ENCODE measurements at regions of chr3 and their contacts with region 1.

Region 1: DNA sequence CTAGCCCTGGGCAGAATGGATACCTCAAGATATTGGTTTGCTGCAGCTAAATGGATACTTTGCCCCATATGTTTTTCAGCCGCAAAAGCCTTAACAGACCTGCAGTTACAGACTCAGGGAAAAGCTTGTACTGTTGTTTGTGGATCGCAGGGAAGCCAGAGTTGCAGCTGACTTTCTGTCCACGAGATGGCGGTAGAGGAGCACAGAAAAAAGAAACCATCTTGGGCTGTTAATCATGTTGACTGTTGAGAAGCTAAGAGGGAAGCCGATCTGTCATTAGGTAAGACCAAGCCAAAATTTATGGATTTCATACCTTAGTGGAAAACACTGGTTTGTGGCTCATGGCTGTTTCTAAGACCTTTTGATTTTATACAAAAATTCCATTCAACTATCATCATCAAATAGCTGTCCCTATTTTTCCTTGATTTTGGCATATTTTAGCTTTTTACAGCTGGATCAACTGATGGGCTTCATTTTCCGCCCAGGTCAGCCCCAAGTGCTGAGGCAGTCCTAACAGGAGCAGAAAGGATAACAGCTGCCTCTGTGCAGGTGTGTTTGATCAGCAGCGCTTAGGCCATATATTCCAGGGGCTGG is 205.7 kb upstream of the ZPLD1 start:
- DNase-seq: peak; percentile 62
- ATAC-seq: peak; percentile 87
- H3K4me3 ChIP-seq: no peak overlapping the region
- H3K27ac ChIP-seq: no peak overlapping the region
- H3K4me1 ChIP-seq: no peaks in the 10 kb centered on the region
- H3K27me3 ChIP-seq: peaks cover 11% of the 10 kb centered on the region
- CTCF ChIP-seq: peak; percentile 91
- POLR2A ChIP-seq: no peak
- RAD21 ChIP-seq: peak; percentile 80

Region 2: GRCh38 chr3:101703169-101703568 is 526.0 kb before region 1 on chr3:
- CTCF ChIA-PET with region 1: no interaction called
- POLR2A ChIA-PET with region 1: no interaction called
- dilution Hi-C with region 1: no loop called
- in situ Hi-C with region 1: no loop called
- intact Hi-C with region 1: loop called (anchors 10 kb)
- DNase-seq: no peak
- ATAC-seq: no peak
- H3K4me3 ChIP-seq: no peak overlapping the region
- H3K27ac ChIP-seq: no peak overlapping the region
- H3K4me1 ChIP-seq: no peaks in the 10 kb centered on the region
- H3K27me3 ChIP-seq: peaks cover 2% of the 10 kb centered on the region; the same call in 1 of the 2 replicates
- CTCF ChIP-seq: no peak
- POLR2A ChIP-seq: no peak
- RAD21 ChIP-seq: no peak

Region 3: GRCh38 chr3:101809178-101810021 is 419.8 kb before region 1 on chr3:
- CTCF ChIA-PET with region 1: interaction called, 81 read pairs
- POLR2A ChIA-PET with region 1: no interaction called
- dilution Hi-C with region 1: no loop called
- in situ Hi-C with region 1: loop called (anchors 5 kb)
- intact Hi-C with region 1: loop called (anchors 1 kb)
- DNase-seq: peak; percentile 56
- ATAC-seq: peak; percentile 77
- H3K4me3 ChIP-seq: no peak overlapping the region
- H3K27ac ChIP-seq: no peak overlapping the region
- H3K4me1 ChIP-seq: peaks cover 2% of the 10 kb centered on the region; the same call in 1 of the 2 replicates
- H3K27me3 ChIP-seq: no peaks in the 10 kb centered on the region
- CTCF ChIP-seq: peak; percentile 72
- POLR2A ChIP-seq: no peak
- RAD21 ChIP-seq: peak; percentile 75

Region 4: DNA sequence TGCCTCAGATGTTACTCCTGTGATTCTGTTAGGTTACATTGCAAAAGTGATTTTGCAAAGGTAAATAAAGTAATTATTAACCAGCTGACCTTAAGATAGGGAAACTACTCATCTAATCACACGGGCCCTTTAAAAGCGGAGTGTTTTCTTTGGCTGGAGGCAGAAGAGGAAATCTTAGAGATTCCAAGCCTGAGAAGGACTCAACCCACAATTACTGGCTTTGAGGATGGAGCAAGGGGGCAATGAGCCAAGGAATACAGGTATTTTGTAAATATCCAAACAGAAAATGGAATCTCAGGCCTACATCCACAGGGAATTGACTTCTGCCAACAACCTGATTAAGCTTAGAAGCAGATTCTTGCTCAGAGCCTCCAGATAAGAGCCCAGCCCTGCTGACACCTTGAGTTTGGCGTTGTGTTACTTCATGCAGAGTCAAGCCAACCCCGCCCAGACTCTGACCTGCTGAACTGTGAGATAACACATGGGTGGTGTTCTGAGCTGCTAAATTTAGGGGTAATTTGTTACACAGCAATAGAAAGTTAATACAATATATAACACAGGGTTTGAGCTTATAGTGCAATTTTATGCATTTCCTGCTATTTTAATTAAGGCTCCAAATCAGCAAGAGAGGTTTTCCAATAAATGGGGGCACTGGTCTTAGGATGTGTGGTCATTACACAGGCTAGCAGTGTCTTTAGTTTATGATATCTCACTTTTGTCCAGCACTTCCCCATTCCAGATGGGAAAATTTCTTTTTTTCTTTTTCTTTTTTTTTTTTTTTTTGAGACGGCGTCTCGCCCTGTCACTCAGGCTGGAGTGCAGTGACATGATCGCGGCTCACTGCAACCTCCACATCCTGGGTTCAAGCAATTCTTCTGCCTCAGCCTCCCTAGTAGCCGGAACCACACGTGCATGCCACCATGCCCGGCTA is 360.4 kb before region 1 on chr3:
- CTCF ChIA-PET with region 1: no interaction called
- POLR2A ChIA-PET with region 1: no interaction called
- dilution Hi-C with region 1: no loop called
- in situ Hi-C with region 1: no loop called
- intact Hi-C with region 1: no loop called
- DNase-seq: peak; percentile 58
- ATAC-seq: no peak
- H3K4me3 ChIP-seq: no peak overlapping the region
- H3K27ac ChIP-seq: no peak overlapping the region
- H3K4me1 ChIP-seq: peaks cover 9% of the 10 kb centered on the region
- H3K27me3 ChIP-seq: no peaks in the 10 kb centered on the region
- CTCF ChIP-seq: no peak
- POLR2A ChIP-seq: no peak
- RAD21 ChIP-seq: no peak

Region 5: DNA sequence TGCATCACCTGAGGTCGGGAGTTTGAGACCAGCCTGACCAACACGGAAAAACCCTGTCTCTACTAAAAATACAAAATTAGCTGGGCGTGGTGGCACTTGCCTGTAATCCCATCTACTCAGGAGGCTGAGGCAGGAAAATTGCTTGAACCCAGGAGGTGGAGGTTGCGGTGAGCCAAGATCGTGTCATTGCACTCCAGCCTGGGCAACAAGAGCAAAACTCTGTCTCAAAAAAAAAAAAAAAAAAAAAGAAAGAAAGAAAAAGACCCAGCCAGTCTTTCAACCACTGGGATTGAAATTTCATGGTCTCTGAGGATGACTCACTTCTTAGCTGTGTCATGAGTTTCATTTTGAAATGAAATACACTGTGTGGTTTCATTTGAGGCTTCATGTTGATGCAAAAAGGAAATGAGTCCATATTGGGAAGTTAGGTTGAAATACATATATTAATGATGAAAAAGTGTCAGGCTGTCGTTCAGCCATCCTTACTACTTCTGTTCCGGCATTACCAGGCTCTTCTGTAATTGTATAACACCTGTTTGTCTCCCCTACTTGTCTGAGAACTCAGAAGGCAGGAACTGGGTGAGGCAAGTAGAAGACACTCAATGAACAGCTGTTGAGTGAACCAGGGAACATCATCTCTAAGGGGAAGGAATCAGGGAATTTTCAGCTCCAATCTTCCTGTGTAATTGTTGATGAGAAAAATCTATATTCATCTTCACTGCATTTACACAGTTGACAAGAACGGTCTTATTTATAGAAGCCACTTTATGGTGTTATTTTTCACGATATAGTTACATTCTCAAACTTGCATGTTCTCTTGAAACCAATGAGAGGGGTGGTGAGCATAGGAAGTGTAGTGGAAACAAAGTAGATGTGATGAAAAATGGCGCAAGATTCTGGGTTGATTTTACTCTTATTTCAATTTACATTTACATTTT is 292.5 kb before region 1 on chr3:
- CTCF ChIA-PET with region 1: interaction called, 3 read pairs
- POLR2A ChIA-PET with region 1: no interaction called
- dilution Hi-C with region 1: no loop called
- in situ Hi-C with region 1: no loop called
- intact Hi-C with region 1: loop called (anchors 2 kb)
- DNase-seq: peak; percentile 94
- ATAC-seq: peak; percentile 44
- H3K4me3 ChIP-seq: no peak overlapping the region
- H3K27ac ChIP-seq: peak overlapping the region; percentile 87
- H3K4me1 ChIP-seq: peaks cover 25% of the 10 kb centered on the region
- H3K27me3 ChIP-seq: no peaks in the 10 kb centered on the region
- CTCF ChIP-seq: no peak
- POLR2A ChIP-seq: no peak
- RAD21 ChIP-seq: no peak

Region 6: DNA sequence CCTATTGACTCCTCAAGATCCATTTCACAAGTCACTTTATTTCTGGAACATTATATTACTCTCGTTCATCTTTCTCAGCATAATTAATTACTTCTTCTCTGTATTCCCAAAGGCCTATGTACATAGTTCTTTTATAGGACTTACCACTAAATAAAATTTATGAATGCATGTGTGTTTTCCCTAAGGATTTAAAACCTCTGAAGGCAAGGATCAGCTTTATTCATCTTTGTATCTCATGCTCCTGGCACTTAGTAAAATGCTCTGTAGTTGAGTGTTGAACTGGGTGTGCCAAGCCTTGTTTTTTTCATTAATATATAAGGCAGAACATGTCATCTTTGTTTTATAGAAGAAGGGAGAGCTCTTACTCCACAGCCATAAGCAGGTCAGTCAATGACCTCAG is 11.6 kb after region 1 on chr3:
- CTCF ChIA-PET with region 1: interaction called, 20 read pairs
- POLR2A ChIA-PET with region 1: no interaction called
- dilution Hi-C with region 1: no loop called
- in situ Hi-C with region 1: no loop called
- intact Hi-C with region 1: no loop called
- DNase-seq: no peak
- ATAC-seq: no peak
- H3K4me3 ChIP-seq: no peak overlapping the region
- H3K27ac ChIP-seq: no peak overlapping the region
- H3K4me1 ChIP-seq: no peaks in the 10 kb centered on the region
- H3K27me3 ChIP-seq: peaks cover 7% of the 10 kb centered on the region
- CTCF ChIP-seq: no peak
- POLR2A ChIP-seq: no peak
- RAD21 ChIP-seq: no peak

Region 7: GRCh38 chr3:102299125-102299877 is 70.1 kb after region 1 on chr3:
- CTCF ChIA-PET with region 1: no interaction called
- POLR2A ChIA-PET with region 1: no interaction called
- dilution Hi-C with region 1: no loop called
- in situ Hi-C with region 1: no loop called
- intact Hi-C with region 1: no loop called
- DNase-seq: no peak
- ATAC-seq: no peak
- H3K4me3 ChIP-seq: no peak overlapping the region
- H3K27ac ChIP-seq: no peak overlapping the region
- H3K4me1 ChIP-seq: no peaks in the 10 kb centered on the region
- H3K27me3 ChIP-seq: peaks cover 1% of the 10 kb centered on the region; the same call in 1 of the 2 replicates
- CTCF ChIP-seq: no peak
- POLR2A ChIP-seq: no peak
- RAD21 ChIP-seq: no peak

Measured in IMR-90 (cell line).